A549 (cell line): ENCODE measurements at regions of chr14 and their contacts with region 1.

Region 1: GRCh38 chr14:49497725-49498348 is 88.3 kb downstream of the RPS29 start:
- DNase-seq: peak; percentile 44 to 77
- ATAC-seq: peak; percentile 58 to 85; a peak in 3 of 6 replicates
- H3K4me3 ChIP-seq: no peak overlapping the region
- H3K27ac ChIP-seq: no peak overlapping the region
- H3K4me1 ChIP-seq: no peaks in the 10 kb centered on the region
- CTCF ChIP-seq: peak; percentile 72
- EP300 ChIP-seq: no peak
- POLR2A ChIP-seq: no peak
- RAD21 ChIP-seq: peak; percentile 66 to 77

Region 2: DNA sequence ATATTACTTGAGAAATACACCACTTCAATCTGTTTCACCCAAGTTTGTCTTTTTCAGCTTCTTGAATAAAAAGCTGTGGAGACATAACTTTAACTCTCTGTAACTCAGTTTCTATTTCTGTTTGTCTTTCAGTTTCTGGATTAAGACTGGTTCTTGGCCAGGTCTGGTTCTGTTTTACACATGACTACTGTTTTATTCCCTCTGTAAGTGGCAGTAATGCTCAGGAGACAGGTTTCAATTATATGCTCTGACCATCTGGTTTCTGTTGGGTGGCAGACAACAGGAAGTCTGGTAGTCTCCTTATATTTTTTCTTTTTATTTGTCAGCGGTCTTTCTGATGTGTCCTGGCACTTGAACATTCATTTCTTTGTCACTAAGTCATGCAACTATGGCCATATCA is 14.6 kb before region 1 on chr14:
- CTCF ChIA-PET with region 1: interaction called, 16 read pairs
- POLR2A ChIA-PET with region 1: no interaction called
- DNase-seq: no peak
- ATAC-seq: no peak
- H3K4me3 ChIP-seq: no peak overlapping the region
- H3K27ac ChIP-seq: no peak overlapping the region
- H3K4me1 ChIP-seq: no peaks in the 10 kb centered on the region
- CTCF ChIP-seq: no peak
- EP300 ChIP-seq: no peak
- POLR2A ChIP-seq: no peak
- RAD21 ChIP-seq: no peak

Region 3: GRCh38 chr14:49574038-49574437 is 76.2 kb after region 1 on chr14:
- CTCF ChIA-PET with region 1: no interaction called
- POLR2A ChIA-PET with region 1: no interaction called
- DNase-seq: no peak
- ATAC-seq: no peak
- H3K4me3 ChIP-seq: no peak overlapping the region
- H3K27ac ChIP-seq: no peak overlapping the region
- H3K4me1 ChIP-seq: no peaks in the 10 kb centered on the region
- CTCF ChIP-seq: no peak
- EP300 ChIP-seq: no peak
- POLR2A ChIP-seq: no peak
- RAD21 ChIP-seq: no peak

Region 4: GRCh38 chr14:49796025-49796424 is 298.2 kb after region 1 on chr14:
- CTCF ChIA-PET with region 1: no interaction called
- POLR2A ChIA-PET with region 1: no interaction called
- DNase-seq: no peak
- ATAC-seq: no peak
- H3K4me3 ChIP-seq: no peak overlapping the region
- H3K27ac ChIP-seq: no peak overlapping the region
- H3K4me1 ChIP-seq: no peaks in the 10 kb centered on the region
- CTCF ChIP-seq: no peak
- EP300 ChIP-seq: no peak
- POLR2A ChIP-seq: no peak
- RAD21 ChIP-seq: no peak